ENCODE measurements at regions of chr5 and their contacts with region 1.

Region 1: GRCh38 chr5:36690041-36690961 is 83.9 kb downstream of the SLC1A3 start:
- DNase-seq: no peak
- H3K4me3 ChIP-seq: peak overlapping the region; percentile 61
- CTCF ChIP-seq: peak; percentile 94

Region 2: GRCh38 chr5:36177715-36178523 is 512.4 kb before region 1 on chr5:
- CTCF ChIA-PET with region 1: interaction called, 19 read pairs
- POLR2A ChIA-PET with region 1: no interaction called
- DNase-seq: no peak
- H3K4me3 ChIP-seq: no peak overlapping the region
- CTCF ChIP-seq: peak; percentile 33

Region 3: GRCh38 chr5:36397901-36398536 is 292.3 kb before region 1 on chr5:
- CTCF ChIA-PET with region 1: interaction called, 127 read pairs
- POLR2A ChIA-PET with region 1: no interaction called
- DNase-seq: no peak
- H3K4me3 ChIP-seq: no peak overlapping the region
- CTCF ChIP-seq: peak; percentile 40

Region 4: GRCh38 chr5:36422952-36423351 is 267.3 kb before region 1 on chr5:
- CTCF ChIA-PET with region 1: interaction called, 566 read pairs
- POLR2A ChIA-PET with region 1: no interaction called
- DNase-seq: no peak
- H3K4me3 ChIP-seq: no peak overlapping the region
- CTCF ChIP-seq: no peak

Region 5: GRCh38 chr5:36569491-36569890 is 120.8 kb before region 1 on chr5:
- CTCF ChIA-PET with region 1: interaction called, 14 read pairs
- POLR2A ChIA-PET with region 1: no interaction called
- DNase-seq: no peak
- H3K4me3 ChIP-seq: no peak overlapping the region
- CTCF ChIP-seq: no peak

Region 6: GRCh38 chr5:36669015-36669651 is 21.2 kb before region 1 on chr5:
- CTCF ChIA-PET with region 1: interaction called, 16 read pairs
- POLR2A ChIA-PET with region 1: no interaction called
- DNase-seq: no peak
- H3K4me3 ChIP-seq: no peak overlapping the region
- CTCF ChIP-seq: no peak